OCI-LY7 (cell line): ENCODE measurements at regions of chr4 and their contacts with region 1.

Region 1: DNA sequence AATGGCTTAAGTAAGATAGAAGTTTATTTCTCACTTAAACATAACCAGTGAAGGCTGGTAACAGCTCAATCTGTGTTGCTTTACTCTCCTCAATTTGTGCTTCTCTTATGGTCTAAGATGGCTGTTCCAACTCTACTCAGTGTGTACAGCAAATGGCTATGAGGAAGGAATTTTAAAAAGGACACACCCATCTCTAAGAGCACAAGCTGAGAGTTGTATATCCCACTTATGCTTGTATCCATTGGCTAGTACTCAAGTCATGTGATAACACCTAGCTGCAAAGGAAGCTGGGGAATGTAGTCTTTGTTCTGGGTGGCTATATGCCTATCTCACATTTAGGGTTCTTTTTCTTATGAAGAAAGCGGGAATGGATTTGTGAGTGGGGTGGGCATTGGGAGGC is 63.3 kb downstream of the GPAT3 start:
- DNase-seq: peak; percentile 67
- H3K4me3 ChIP-seq: no peak overlapping the region
- H3K27ac ChIP-seq: no peak overlapping the region
- H3K4me1 ChIP-seq: no peaks in the 10 kb centered on the region
- CTCF ChIP-seq: no peak

Region 2: GRCh38 chr4:82948647-82949204 is 650.5 kb before region 1 on chr4:
- CTCF ChIA-PET with region 1: no interaction called
- POLR2A ChIA-PET with region 1: no interaction called
- intact Hi-C with region 1: no loop called
- DNase-seq: no peak
- H3K4me3 ChIP-seq: no peak overlapping the region
- H3K27ac ChIP-seq: no peak overlapping the region
- H3K4me1 ChIP-seq: no peaks in the 10 kb centered on the region
- CTCF ChIP-seq: no peak

Region 3: GRCh38 chr4:83582289-83582769 is 16.9 kb before region 1 on chr4:
- CTCF ChIA-PET with region 1: no interaction called
- POLR2A ChIA-PET with region 1: interaction called, 26 read pairs
- intact Hi-C with region 1: no loop called
- DNase-seq: peak; percentile 58
- H3K4me3 ChIP-seq: peak overlapping the region; percentile 11
- H3K27ac ChIP-seq: peak overlapping the region; percentile 14
- H3K4me1 ChIP-seq: peaks cover 12% of the 10 kb centered on the region
- CTCF ChIP-seq: peak; percentile 72